Transverse colon (tissue), 4 donors: ENCODE measurements at regions of chr1 and their contacts with region 1.

Region 1: DNA sequence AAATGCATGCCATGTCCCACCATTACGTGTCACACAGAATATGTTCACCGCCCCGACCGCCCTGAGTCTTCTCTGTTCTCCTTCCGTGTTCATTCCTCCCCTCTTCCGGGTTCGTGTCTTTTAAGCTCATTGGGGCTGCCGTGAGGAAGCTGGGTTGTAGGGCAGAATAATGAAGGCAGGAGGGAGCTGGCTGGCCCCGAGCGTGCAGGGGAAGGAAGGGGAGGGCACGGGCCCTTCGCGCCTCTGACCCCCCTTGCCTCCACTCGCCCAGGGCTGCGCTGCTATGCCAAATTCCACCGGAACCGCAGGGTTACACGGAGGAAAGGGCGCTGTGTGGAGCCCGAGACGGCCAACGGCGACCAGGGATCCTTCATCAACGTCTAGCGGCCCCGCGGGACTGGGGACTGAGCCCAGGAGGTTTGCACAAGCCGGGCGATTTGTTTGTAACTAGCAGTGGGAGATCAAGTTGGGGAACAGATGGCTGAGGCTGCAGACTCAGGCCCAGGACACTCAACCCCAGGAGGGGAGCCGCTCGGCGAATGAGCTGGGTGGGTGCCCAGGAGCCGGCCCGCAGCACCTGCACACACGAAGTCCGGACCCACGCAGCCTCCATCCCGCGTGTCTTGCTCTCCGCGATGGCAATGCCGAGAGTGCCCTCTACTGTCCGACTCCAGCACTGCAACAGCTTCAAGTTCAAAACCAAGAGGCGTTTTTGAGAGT is 16.5 kb upstream of the AGTRAP start:
- DNase-seq: peak; percentile 88
- H3K4me3 ChIP-seq: peak overlapping the region; percentile 24 to 43 (median 36)
- H3K27ac ChIP-seq: peak overlapping the region; percentile 54 to 79 (median 72)
- H3K4me1 ChIP-seq: peaks cover 0 to 14% (median 4%) of the 10 kb centered on the region in 4 donors
- H3K27me3 ChIP-seq: peaks cover 3% of the 10 kb centered on the region
- CTCF ChIP-seq: peak; percentile 91 to 98 (median 94)
- EP300 ChIP-seq: no peak
- POLR2A ChIP-seq: no peak

Region 2: GRCh38 chr1:11417162-11417561 is 302.3 kb before region 1 on chr1:
- in situ Hi-C with region 1: no loop called
- intact Hi-C with region 1: no loop called
- DNase-seq: no peak
- H3K4me3 ChIP-seq: no peak overlapping the region
- H3K27ac ChIP-seq: no peak overlapping the region
- H3K4me1 ChIP-seq: no peaks in the 10 kb centered on the region
- H3K27me3 ChIP-seq: peaks cover 50% of the 10 kb centered on the region
- CTCF ChIP-seq: no peak
- EP300 ChIP-seq: no peak
- POLR2A ChIP-seq: no peak

Region 3: DNA sequence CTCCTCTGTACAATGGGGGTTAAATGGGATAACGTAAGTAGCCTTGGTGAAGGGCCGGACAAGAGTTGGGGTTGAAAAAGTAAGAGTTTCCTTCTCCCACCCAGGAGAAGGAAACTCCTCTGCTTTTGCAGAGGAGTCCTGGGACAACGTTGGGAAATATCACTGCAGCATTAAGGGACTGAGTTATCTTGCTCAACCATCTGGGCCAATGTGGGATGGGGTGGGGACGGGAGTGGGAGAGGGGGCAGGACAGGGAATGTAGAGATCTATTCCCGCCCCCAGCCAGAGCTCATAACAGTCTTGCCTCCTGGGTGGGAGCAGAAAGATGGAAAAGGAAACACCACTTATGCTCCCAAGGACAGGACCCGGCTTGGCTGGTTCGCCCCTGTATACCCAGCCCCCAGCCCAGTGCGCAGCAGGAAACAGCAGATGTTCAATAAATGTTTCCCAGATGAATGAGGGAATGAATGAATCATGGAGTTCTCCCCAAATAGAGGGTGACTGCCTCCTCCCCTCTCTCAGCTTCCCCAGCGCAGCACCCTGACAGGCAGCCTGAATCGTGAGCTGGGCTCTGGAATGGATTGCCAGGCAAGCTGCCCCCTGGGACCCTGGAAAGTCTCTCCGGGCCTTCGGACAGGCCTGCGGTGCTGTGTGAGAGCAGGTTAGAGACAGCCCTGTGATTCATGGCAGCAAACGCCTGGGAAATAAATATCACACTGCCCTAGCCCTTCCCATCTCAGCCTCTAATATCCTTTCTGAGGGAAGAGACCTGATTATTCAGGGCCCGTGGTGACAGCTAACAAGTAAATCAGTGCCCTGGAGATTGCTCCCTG is 90.1 kb before region 1 on chr1:
- in situ Hi-C with region 1: no loop called
- intact Hi-C with region 1: no loop called
- DNase-seq: no peak
- H3K4me3 ChIP-seq: no peak overlapping the region
- H3K27ac ChIP-seq: no peak overlapping the region
- H3K4me1 ChIP-seq: no peaks in the 10 kb centered on the region
- H3K27me3 ChIP-seq: peaks cover 25% of the 10 kb centered on the region
- CTCF ChIP-seq: no peak
- EP300 ChIP-seq: no peak
- POLR2A ChIP-seq: no peak

Region 4: GRCh38 chr1:11654939-11655808 is 64.3 kb before region 1 on chr1:
- in situ Hi-C with region 1: loop called (anchors 5 to 10 kb)
- intact Hi-C with region 1: loop called (anchors 5 kb)
- DNase-seq: no peak
- H3K4me3 ChIP-seq: peak overlapping the region; percentile 50 to 85 (median 64)
- H3K27ac ChIP-seq: peak overlapping the region in 2 of 4 donors; percentile 42 to 43
- H3K4me1 ChIP-seq: peaks cover 18 to 25% (median 20%) of the 10 kb centered on the region in 4 donors
- H3K27me3 ChIP-seq: peaks cover 24% of the 10 kb centered on the region
- CTCF ChIP-seq: no peak
- EP300 ChIP-seq: no peak
- POLR2A ChIP-seq: no peak

Region 5: GRCh38 chr1:11661103-11661502 is 58.4 kb before region 1 on chr1:
- in situ Hi-C with region 1: loop called (anchors 5 to 10 kb)
- intact Hi-C with region 1: no loop called
- DNase-seq: no peak
- H3K4me3 ChIP-seq: no peak overlapping the region
- H3K27ac ChIP-seq: no peak overlapping the region
- H3K4me1 ChIP-seq: peaks cover 0 to 13% (median 6%) of the 10 kb centered on the region in 4 donors
- H3K27me3 ChIP-seq: no peaks in the 10 kb centered on the region
- CTCF ChIP-seq: no peak
- EP300 ChIP-seq: no peak
- POLR2A ChIP-seq: no peak

Region 6: DNA sequence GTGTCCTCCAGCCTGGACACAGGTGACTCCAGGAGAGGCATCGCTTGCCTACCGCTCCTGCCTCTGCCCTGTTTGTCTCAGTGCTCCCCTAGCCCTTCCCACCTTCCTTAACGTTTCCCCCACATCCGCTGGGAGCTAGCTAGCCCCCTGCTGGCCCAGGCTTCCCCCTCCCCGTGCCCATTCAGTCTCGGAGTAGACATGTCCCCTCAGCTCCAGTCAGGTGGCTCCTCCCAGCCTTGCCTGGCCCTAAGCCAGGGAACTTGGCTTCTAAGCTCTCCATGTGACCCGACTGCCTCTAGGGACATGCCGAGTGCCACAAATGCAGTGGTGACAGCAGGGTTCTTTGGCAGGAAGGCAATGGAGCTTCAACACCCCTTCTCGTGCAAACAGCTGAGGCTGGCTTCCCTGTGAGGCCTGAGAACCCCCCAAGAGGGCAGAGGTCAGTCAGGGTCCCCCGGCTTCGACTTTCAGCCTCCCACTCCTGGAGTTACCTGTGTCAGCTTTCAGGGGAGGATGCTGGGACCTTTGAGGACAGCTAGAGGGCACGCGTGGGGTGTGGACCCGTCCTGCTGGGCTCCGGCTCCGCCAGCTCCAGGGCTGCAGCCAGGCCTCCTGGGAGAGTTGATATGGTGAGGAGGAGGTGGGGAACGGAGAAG is 11.7 kb before region 1 on chr1:
- in situ Hi-C with region 1: no loop called
- intact Hi-C with region 1: no loop called
- DNase-seq: peak; percentile 28
- H3K4me3 ChIP-seq: no peak overlapping the region
- H3K27ac ChIP-seq: no peak overlapping the region
- H3K4me1 ChIP-seq: no peaks in the 10 kb centered on the region
- H3K27me3 ChIP-seq: peaks cover 31% of the 10 kb centered on the region
- CTCF ChIP-seq: no peak
- EP300 ChIP-seq: no peak
- POLR2A ChIP-seq: no peak

Region 7: GRCh38 chr1:12001249-12001917 is 281.9 kb after region 1 on chr1:
- in situ Hi-C with region 1: no loop called
- intact Hi-C with region 1: no loop called
- DNase-seq: no peak
- H3K4me3 ChIP-seq: no peak overlapping the region
- H3K27ac ChIP-seq: no peak overlapping the region
- H3K4me1 ChIP-seq: no peaks in the 10 kb centered on the region
- H3K27me3 ChIP-seq: no peaks in the 10 kb centered on the region
- CTCF ChIP-seq: peak in 3 of 5 experiments; percentile 19 to 29 (median 27)
- EP300 ChIP-seq: no peak
- POLR2A ChIP-seq: no peak